ENCODE measurements at regions of chr14 and their contacts with region 1.

Region 1: GRCh38 chr14:53539489-53540126 is 386.5 kb upstream of the DDHD1 start:
- DNase-seq: peak; percentile 82
- H3K4me3 Mint-ChIP-seq: no peak overlapping the region
- H3K27ac Mint-ChIP-seq: no peak overlapping the region
- H3K4me1 Mint-ChIP-seq: no peaks in the 10 kb centered on the region
- H3K27me3 Mint-ChIP-seq: no peaks in the 10 kb centered on the region
- CTCF ChIP-seq: peak; percentile 49

Region 2: GRCh38 chr14:53470351-53471043 is 69.1 kb before region 1 on chr14:
- CTCF ChIA-PET with region 1: no interaction called
- intact Hi-C with region 1: no loop called
- DNase-seq: no peak
- H3K4me3 Mint-ChIP-seq: no peak overlapping the region
- H3K27ac Mint-ChIP-seq: no peak overlapping the region
- H3K4me1 Mint-ChIP-seq: no peaks in the 10 kb centered on the region
- H3K27me3 Mint-ChIP-seq: no peaks in the 10 kb centered on the region
- CTCF ChIP-seq: no peak

Region 3: GRCh38 chr14:53570411-53571387 is 31.1 kb after region 1 on chr14:
- CTCF ChIA-PET with region 1: no interaction called
- intact Hi-C with region 1: no loop called
- DNase-seq: no peak
- H3K4me3 Mint-ChIP-seq: no peak overlapping the region
- H3K27ac Mint-ChIP-seq: no peak overlapping the region
- H3K4me1 Mint-ChIP-seq: no peaks in the 10 kb centered on the region
- H3K27me3 Mint-ChIP-seq: no peaks in the 10 kb centered on the region
- CTCF ChIP-seq: no peak

Region 4: GRCh38 chr14:53613404-53614253 is 74.0 kb after region 1 on chr14:
- CTCF ChIA-PET with region 1: no interaction called
- intact Hi-C with region 1: loop called (anchors 5 kb)
- DNase-seq: peak; percentile 64
- H3K4me3 Mint-ChIP-seq: peak overlapping the region; percentile 72
- H3K27ac Mint-ChIP-seq: peak overlapping the region; percentile 94
- H3K4me1 Mint-ChIP-seq: peaks cover 30% of the 10 kb centered on the region
- H3K27me3 Mint-ChIP-seq: no peaks in the 10 kb centered on the region
- CTCF ChIP-seq: no peak

Region 5: DNA sequence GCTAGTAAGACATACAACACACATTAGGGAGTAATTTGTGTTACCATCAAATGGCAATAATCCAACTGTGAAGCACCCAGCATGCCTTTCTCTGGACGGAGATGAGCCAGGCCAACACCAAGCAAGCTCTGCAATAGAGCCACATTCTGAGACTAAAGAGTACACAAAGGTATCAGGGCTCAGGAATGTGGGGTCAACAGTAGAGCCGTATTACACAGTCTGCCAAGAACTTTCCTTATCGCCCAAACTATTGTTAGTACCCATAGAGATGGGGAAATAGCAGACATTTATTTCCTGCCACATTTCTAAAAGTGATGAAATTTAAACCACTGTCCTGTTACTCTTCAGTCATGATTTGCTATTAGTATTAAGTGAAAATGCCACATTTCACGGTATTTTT is 303.3 kb after region 1 on chr14:
- CTCF ChIA-PET with region 1: no interaction called
- intact Hi-C with region 1: loop called (anchors 5 kb)
- DNase-seq: peak; percentile 75
- H3K4me3 Mint-ChIP-seq: no peak overlapping the region
- H3K27ac Mint-ChIP-seq: peak overlapping the region; percentile 80
- H3K4me1 Mint-ChIP-seq: peaks cover 72% of the 10 kb centered on the region
- H3K27me3 Mint-ChIP-seq: no peaks in the 10 kb centered on the region
- CTCF ChIP-seq: no peak

Region 6: GRCh38 chr14:53963320-53964227 is 424.0 kb after region 1 on chr14:
- CTCF ChIA-PET with region 1: no interaction called
- intact Hi-C with region 1: loop called (anchors 5 kb)
- DNase-seq: peak; percentile 75
- H3K4me3 Mint-ChIP-seq: peak overlapping the region; percentile 84
- H3K27ac Mint-ChIP-seq: no peak overlapping the region
- H3K4me1 Mint-ChIP-seq: peaks cover 12% of the 10 kb centered on the region
- H3K27me3 Mint-ChIP-seq: no peaks in the 10 kb centered on the region
- CTCF ChIP-seq: peak; percentile 48

Region 7: DNA sequence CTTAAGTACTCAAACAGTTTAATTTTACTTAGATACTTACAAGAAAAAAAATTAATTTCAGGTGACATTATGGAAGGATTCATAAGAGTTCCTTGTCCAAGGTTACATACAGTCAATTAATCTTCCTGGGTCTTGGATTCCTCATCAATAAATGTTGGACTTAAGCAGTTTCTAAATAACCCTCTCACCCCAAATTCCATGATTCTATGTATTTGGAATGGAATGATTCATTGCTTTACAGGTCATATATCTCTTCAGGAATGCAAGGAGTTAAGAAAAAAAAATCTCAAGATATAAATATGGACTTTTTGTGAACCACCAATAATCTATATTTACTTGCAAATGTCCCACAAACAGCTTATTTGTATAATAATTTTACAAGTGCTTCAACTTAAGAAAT is 501.2 kb after region 1 on chr14:
- CTCF ChIA-PET with region 1: no interaction called
- intact Hi-C with region 1: no loop called
- DNase-seq: no peak
- H3K4me3 Mint-ChIP-seq: no peak overlapping the region
- H3K27ac Mint-ChIP-seq: no peak overlapping the region
- H3K4me1 Mint-ChIP-seq: no peaks in the 10 kb centered on the region
- H3K27me3 Mint-ChIP-seq: no peaks in the 10 kb centered on the region
- CTCF ChIP-seq: no peak

Region 8: DNA sequence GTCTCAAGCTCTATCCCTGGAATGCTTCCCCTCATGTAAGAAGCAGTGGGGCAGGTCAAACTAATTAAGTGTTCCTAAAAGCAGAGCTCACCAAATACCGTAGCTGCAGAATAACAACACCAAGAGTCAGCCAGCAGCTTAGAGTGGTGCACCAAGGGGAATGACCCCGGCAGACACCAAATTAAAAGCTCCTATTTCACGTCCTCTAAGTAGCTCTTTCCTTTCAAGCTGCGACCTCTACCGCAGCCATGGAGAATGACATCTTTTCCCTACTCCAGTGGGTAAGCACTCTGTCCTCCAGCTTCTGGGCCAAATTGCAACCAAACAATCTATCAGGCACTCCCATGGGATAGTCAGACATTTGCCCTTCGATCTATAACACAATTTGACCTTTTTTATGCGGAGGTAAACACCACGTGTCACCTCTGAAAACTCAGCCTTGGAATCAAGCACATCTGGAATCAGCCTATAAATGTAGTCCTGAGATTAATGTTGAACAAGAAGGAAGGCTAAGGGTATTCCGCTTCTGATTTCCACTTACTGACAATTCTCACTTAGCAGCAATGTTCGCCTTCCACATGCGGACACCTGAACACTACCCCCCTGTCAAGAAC is 789.6 kb after region 1 on chr14:
- CTCF ChIA-PET with region 1: interaction called, 4 read pairs
- intact Hi-C with region 1: loop called (anchors 2 kb)
- DNase-seq: peak; percentile 50
- H3K4me3 Mint-ChIP-seq: no peak overlapping the region
- H3K27ac Mint-ChIP-seq: no peak overlapping the region
- H3K4me1 Mint-ChIP-seq: no peaks in the 10 kb centered on the region
- H3K27me3 Mint-ChIP-seq: no peaks in the 10 kb centered on the region
- CTCF ChIP-seq: peak; percentile 48